HEK293 (cell line): ENCODE measurements at regions of chr6 and their contacts with region 1.

Region 1: GRCh38 chr6:121055572-121056163 is 278.6 kb downstream of the TBC1D32 start:
- H3K4me3 ChIP-seq: no peak overlapping the region
- H3K27ac ChIP-seq: no peak overlapping the region
- H3K4me1 ChIP-seq: no peaks in the 10 kb centered on the region
- CTCF ChIP-seq: peak; percentile 34; the same call in 1 of the 2 replicates

Region 2: DNA sequence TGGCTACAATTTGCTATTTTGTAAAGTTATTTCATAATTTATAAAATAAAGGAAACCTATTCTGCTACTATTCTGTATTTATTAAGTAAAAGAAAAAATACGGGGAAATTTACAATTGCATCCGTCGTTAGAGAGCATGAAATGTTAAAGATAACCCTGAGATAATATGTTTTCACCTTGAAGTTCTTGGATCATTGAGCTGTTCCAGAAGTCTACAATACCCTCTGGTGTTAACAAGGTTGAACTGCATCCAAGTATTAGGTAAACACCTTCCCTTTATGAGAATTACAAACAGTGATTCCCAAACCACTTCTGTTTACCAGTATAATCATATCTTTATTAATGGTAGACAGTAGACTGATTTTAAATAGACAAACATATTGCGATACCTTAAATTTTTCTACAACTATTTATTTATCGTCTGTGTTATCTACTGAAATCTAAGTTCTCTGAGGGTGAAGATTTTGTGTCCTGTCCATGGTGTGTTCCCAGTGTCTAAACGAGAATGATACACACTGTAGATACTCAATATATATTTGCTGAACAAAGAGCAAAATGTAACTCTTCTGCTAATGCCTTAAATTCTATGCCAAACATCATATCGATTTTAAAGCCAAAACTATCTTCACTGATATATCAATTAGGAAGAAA is 250.4 kb after region 1 on chr6:
- CTCF ChIA-PET with region 1: interaction called, 68 read pairs
- POLR2A ChIA-PET with region 1: no interaction called
- H3K4me3 ChIP-seq: no peak overlapping the region
- H3K27ac ChIP-seq: no peak overlapping the region
- H3K4me1 ChIP-seq: no peaks in the 10 kb centered on the region
- CTCF ChIP-seq: 0 out of 2 replicates have a peak, but pooled peaks have one; percentile 22